Mammary epithelial cell (primary cell): ENCODE measurements at regions of chr4 and their contacts with region 1.

Region 1: DNA sequence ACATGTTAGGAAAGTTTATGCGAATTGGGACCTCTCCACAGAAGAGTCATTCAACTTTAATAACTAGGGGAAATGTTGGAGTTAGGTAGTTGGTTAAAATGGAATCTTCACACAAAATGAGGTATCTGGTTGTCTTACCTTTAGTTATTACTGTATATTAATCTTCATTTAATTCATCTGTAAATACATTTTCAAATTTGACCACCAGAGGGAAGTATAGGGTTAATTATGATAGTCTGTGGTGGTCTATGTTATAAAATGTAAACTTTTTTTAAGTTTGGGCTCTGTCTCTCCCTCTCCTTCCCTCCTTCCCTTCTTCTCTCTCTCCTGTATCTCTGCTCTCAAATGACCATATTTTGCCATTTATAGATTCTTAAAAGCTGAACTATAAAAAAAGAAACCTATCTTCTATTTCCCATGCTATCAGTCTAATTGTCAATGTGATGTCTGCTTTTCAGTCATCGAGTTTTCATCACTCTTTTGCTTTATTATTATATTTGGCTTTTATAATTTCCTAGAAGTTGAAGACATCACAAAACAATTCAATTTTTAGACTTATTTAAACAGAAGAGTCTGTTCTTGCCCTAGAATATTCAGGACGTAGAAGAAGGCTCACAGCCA is 49.8 kb downstream of the TMEM144 start:
- DNase-seq: peak; percentile 11
- H3K4me3 ChIP-seq: no peak overlapping the region
- H3K27ac ChIP-seq: no peak overlapping the region
- H3K4me1 ChIP-seq: no peaks in the 10 kb centered on the region
- H3K27me3 ChIP-seq: no peaks in the 10 kb centered on the region
- CTCF ChIP-seq: peak; percentile 25 to 39

Region 2: GRCh38 chr4:158410272-158410671 is 150.2 kb after region 1 on chr4:
- CTCF ChIA-PET with region 1: no interaction called
- dilution Hi-C with region 1: no loop called
- in situ Hi-C with region 1: loop called in 1 of 2 experiments (anchors 10 kb)
- intact Hi-C with region 1: loop called (anchors 1 kb)
- DNase-seq: peak; percentile 22
- H3K4me3 ChIP-seq: no peak overlapping the region
- H3K27ac ChIP-seq: no peak overlapping the region
- H3K4me1 ChIP-seq: no peaks in the 10 kb centered on the region
- H3K27me3 ChIP-seq: no peaks in the 10 kb centered on the region
- CTCF ChIP-seq: peak; percentile 12 to 35